PC-9 (cell line): ENCODE measurements at regions of chr21 and their contacts with region 1.

Region 1: DNA sequence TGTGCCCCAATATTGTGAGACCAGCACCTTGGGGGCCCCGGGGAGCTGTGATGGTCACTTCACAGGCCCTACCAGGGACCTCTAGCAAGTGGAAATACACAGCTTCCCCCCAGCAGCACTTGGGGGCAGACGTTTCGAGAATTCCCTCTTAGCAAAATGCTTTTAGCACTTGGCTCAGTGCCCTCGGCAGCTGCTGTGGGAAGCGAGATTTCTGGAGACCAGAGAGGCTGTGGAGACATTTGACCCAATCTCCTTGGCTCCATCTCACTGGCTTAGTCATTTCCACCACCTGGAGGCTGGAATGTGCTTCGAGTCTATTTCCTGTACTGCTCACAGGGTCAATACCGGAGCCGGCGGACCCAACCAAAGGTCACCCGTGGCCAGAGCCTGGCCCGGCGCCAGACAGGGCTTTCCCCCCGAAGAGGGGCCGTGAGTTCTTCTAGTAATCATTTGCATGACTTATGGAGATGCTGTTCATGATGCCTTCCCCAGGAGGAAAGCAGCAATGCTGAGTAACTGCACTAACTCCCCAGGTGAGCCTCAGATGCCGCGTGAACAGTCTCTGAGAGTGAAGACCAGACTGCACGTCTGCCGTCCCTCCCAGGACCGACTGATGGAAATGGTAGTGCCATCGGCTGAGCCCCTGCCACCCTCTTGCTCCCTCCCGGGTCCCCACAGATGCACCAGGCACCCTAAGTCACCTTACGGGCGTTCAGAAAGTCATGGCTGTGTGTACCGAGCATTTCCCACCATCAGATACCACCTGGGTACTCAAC is 4.4 kb upstream of the C2CD2 start:
- DNase-seq: peak; percentile 85 to 93
- H3K4me3 ChIP-seq: no peak overlapping the region
- H3K27ac ChIP-seq: peak overlapping the region; percentile 86
- H3K4me1 ChIP-seq: peaks cover 54% of the 10 kb centered on the region
- H3K27me3 ChIP-seq: no peaks in the 10 kb centered on the region
- CTCF ChIP-seq: peak; percentile 55; the same call in 1 of the 2 replicates

Region 2: GRCh38 chr21:41894922-41895557 is 63.1 kb before region 1 on chr21:
- CTCF ChIA-PET with region 1: no interaction called
- POLR2A ChIA-PET with region 1: no interaction called
- intact Hi-C with region 1: loop called (anchors 5 kb)
- DNase-seq: peak in 1 of 2 experiments; percentile 45
- H3K4me3 ChIP-seq: no peak overlapping the region
- H3K27ac ChIP-seq: no peak overlapping the region
- H3K4me1 ChIP-seq: peaks cover 18% of the 10 kb centered on the region
- H3K27me3 ChIP-seq: no peaks in the 10 kb centered on the region
- CTCF ChIP-seq: no peak

Region 3: GRCh38 chr21:42002421-42002958 is 44.3 kb after region 1 on chr21:
- CTCF ChIA-PET with region 1: no interaction called
- POLR2A ChIA-PET with region 1: no interaction called
- intact Hi-C with region 1: loop called (anchors 2 kb)
- DNase-seq: peak in 1 of 2 experiments; percentile 35
- H3K4me3 ChIP-seq: no peak overlapping the region
- H3K27ac ChIP-seq: no peak overlapping the region
- H3K4me1 ChIP-seq: no peaks in the 10 kb centered on the region
- H3K27me3 ChIP-seq: no peaks in the 10 kb centered on the region
- CTCF ChIP-seq: no peak

Region 4: GRCh38 chr21:42093991-42094421 is 135.8 kb after region 1 on chr21:
- CTCF ChIA-PET with region 1: no interaction called
- POLR2A ChIA-PET with region 1: no interaction called
- intact Hi-C with region 1: loop called (anchors 5 kb)
- DNase-seq: peak; percentile 75 to 90
- H3K4me3 ChIP-seq: peak overlapping the region; percentile 24; the same call in 1 of the 2 replicates
- H3K27ac ChIP-seq: peak overlapping the region; percentile 75
- H3K4me1 ChIP-seq: peaks cover 37% of the 10 kb centered on the region
- H3K27me3 ChIP-seq: no peaks in the 10 kb centered on the region
- CTCF ChIP-seq: no peak

Region 5: GRCh38 chr21:42117229-42117966 is 159.2 kb after region 1 on chr21:
- CTCF ChIA-PET with region 1: no interaction called
- POLR2A ChIA-PET with region 1: no interaction called
- intact Hi-C with region 1: loop called (anchors 2 kb)
- DNase-seq: peak; percentile 47 to 69
- H3K4me3 ChIP-seq: no peak overlapping the region
- H3K27ac ChIP-seq: no peak overlapping the region
- H3K4me1 ChIP-seq: peaks cover 32% of the 10 kb centered on the region
- H3K27me3 ChIP-seq: no peaks in the 10 kb centered on the region
- CTCF ChIP-seq: peak; percentile 89